CD14-positive monocyte (primary cell): ENCODE measurements at regions of chr6 and their contacts with region 1.

Region 1: GRCh38 chr6:32413427-32414047 is 6.6 kb upstream of the BTNL2 start:
- DNase-seq: peak; percentile 71 to 83 (median 77)
- H3K4me3 ChIP-seq: no peak overlapping the region
- H3K4me3 Mint-ChIP-seq: peak overlapping the region in 1 of 2 donors; percentile 52
- H3K27ac ChIP-seq: no peak overlapping the region
- H3K27ac Mint-ChIP-seq: no peak overlapping the region
- H3K4me1 ChIP-seq: peaks cover 4 to 6% of the 10 kb centered on the region in 2 donors
- H3K4me1 Mint-ChIP-seq: peaks cover 11% of the 10 kb centered on the region
- H3K27me3 ChIP-seq: peaks cover 0 to 10% of the 10 kb centered on the region in 2 donors
- H3K27me3 Mint-ChIP-seq: peaks cover 11 to 23% (median 14%) of the 10 kb centered on the region in 3 donors
- CTCF ChIP-seq: peak; percentile 93

Region 2: GRCh38 chr6:32244946-32245398 is 168.6 kb before region 1 on chr6:
- intact Hi-C with region 1: loop called in 1 of 2 experiments (anchors 10 kb)
- DNase-seq: peak; percentile 55 to 77 (median 61)
- H3K4me3 ChIP-seq: peak overlapping the region in 1 of 3 experiments; percentile 24
- H3K4me3 Mint-ChIP-seq: peak overlapping the region in 1 of 2 donors; percentile 77
- H3K27ac ChIP-seq: no peak overlapping the region
- H3K27ac Mint-ChIP-seq: peak overlapping the region in 1 of 7 donors; percentile 44
- H3K4me1 ChIP-seq: peaks cover 8% of the 10 kb centered on the region in 2 donors
- H3K4me1 Mint-ChIP-seq: peaks cover 9% of the 10 kb centered on the region
- H3K27me3 ChIP-seq: no peaks in the 10 kb centered on the region
- H3K27me3 Mint-ChIP-seq: peaks cover 2 to 7% (median 4%) of the 10 kb centered on the region in 3 donors
- CTCF ChIP-seq: peak; percentile 92

Region 3: GRCh38 chr6:32382757-32383156 is 30.8 kb before region 1 on chr6:
- intact Hi-C with region 1: no loop called
- DNase-seq: no peak
- H3K4me3 ChIP-seq: no peak overlapping the region
- H3K4me3 Mint-ChIP-seq: no peak overlapping the region
- H3K27ac ChIP-seq: no peak overlapping the region
- H3K27ac Mint-ChIP-seq: peak overlapping the region in 1 of 7 donors; percentile 8
- H3K4me1 ChIP-seq: no peaks in the 10 kb centered on the region
- H3K4me1 Mint-ChIP-seq: peaks cover 18% of the 10 kb centered on the region
- H3K27me3 ChIP-seq: no peaks in the 10 kb centered on the region
- H3K27me3 Mint-ChIP-seq: peaks cover 1 to 4% (median 2%) of the 10 kb centered on the region in 3 donors
- CTCF ChIP-seq: no peak

Region 4: GRCh38 chr6:32462609-32463008 is 49.1 kb after region 1 on chr6:
- intact Hi-C with region 1: no loop called
- DNase-seq: peak in 1 of 3 donors; percentile 59
- H3K4me3 ChIP-seq: no peak overlapping the region
- H3K4me3 Mint-ChIP-seq: no peak overlapping the region
- H3K27ac ChIP-seq: no peak overlapping the region
- H3K27ac Mint-ChIP-seq: no peak overlapping the region
- H3K4me1 ChIP-seq: peaks cover 0 to 4% of the 10 kb centered on the region in 2 donors
- H3K4me1 Mint-ChIP-seq: peaks cover 16% of the 10 kb centered on the region
- H3K27me3 ChIP-seq: peaks cover 9 to 10% of the 10 kb centered on the region in 2 donors
- H3K27me3 Mint-ChIP-seq: peaks cover 17 to 34% (median 19%) of the 10 kb centered on the region in 3 donors
- CTCF ChIP-seq: no peak

Region 5: DNA sequence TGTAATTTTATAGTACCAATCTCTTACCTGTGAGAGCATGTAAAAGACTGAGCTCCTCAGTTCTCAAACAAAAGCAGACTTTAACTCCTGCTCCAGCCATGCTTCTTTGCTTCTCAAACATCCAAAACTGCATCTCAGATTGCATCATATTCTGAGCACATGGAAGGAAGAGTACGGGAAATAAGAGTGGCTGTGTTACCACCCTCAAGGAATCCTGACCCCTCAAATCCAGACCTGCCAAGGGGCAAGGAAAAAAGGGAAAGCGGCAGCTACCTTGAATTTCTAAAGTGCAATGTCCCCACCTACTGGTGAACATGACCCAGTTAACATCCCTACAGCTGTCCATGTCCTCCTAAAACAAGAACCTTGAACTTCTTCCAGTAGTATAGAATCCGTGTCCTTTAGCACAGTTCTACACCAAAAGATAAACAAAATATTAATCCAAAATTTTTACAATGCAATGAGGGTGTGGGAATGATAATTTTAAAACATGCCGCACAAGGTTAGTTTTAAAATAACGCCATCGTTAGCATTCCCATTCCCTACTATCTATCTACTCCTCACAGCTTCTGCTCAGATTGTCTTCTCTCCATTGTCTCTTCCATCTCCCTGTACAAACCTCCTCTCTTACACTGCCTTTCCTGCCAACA is 287.0 kb after region 1 on chr6:
- intact Hi-C with region 1: loop called in 1 of 2 experiments (anchors 5 kb)
- DNase-seq: peak; percentile 29 to 67 (median 50)
- H3K4me3 ChIP-seq: no peak overlapping the region
- H3K4me3 Mint-ChIP-seq: peak overlapping the region in 1 of 2 donors; percentile 63
- H3K27ac ChIP-seq: no peak overlapping the region
- H3K27ac Mint-ChIP-seq: peak overlapping the region in 2 of 7 donors; percentile 47 to 54
- H3K4me1 ChIP-seq: peaks cover 7 to 8% of the 10 kb centered on the region in 2 donors
- H3K4me1 Mint-ChIP-seq: peaks cover 12% of the 10 kb centered on the region
- H3K27me3 ChIP-seq: peaks cover 8 to 20% of the 10 kb centered on the region in 2 donors
- H3K27me3 Mint-ChIP-seq: peaks cover 13 to 32% (median 26%) of the 10 kb centered on the region in 3 donors
- CTCF ChIP-seq: peak; percentile 80

Region 6: GRCh38 chr6:32785781-32786533 is 372.4 kb after region 1 on chr6:
- intact Hi-C with region 1: loop called in 1 of 2 experiments (anchors 2 kb)
- DNase-seq: peak; percentile 61 to 69 (median 62)
- H3K4me3 ChIP-seq: no peak overlapping the region
- H3K4me3 Mint-ChIP-seq: peak overlapping the region in 1 of 2 donors; percentile 52
- H3K27ac ChIP-seq: no peak overlapping the region
- H3K27ac Mint-ChIP-seq: peak overlapping the region in 2 of 7 donors; percentile 21 to 82
- H3K4me1 ChIP-seq: peaks cover 8 to 12% of the 10 kb centered on the region in 2 donors
- H3K4me1 Mint-ChIP-seq: peaks cover 8% of the 10 kb centered on the region
- H3K27me3 ChIP-seq: no peaks in the 10 kb centered on the region
- H3K27me3 Mint-ChIP-seq: peaks cover 6 to 12% (median 9%) of the 10 kb centered on the region in 3 donors
- CTCF ChIP-seq: peak; percentile 85

Region 7: GRCh38 chr6:32796848-32797776 is 383.6 kb after region 1 on chr6:
- intact Hi-C with region 1: loop called (anchors 2 to 5 kb)
- DNase-seq: peak; percentile 65 to 88 (median 76)
- H3K4me3 ChIP-seq: peak overlapping the region; percentile 0 to 69 (median 31)
- H3K4me3 Mint-ChIP-seq: peak overlapping the region; percentile 72 to 93
- H3K27ac ChIP-seq: peak overlapping the region; percentile 8 to 42
- H3K27ac Mint-ChIP-seq: peak overlapping the region; percentile 62 to 90 (median 87)
- H3K4me1 ChIP-seq: peaks cover 43 to 46% of the 10 kb centered on the region in 2 donors
- H3K4me1 Mint-ChIP-seq: peaks cover 43% of the 10 kb centered on the region
- H3K27me3 ChIP-seq: peaks cover 0 to 5% of the 10 kb centered on the region in 2 donors
- H3K27me3 Mint-ChIP-seq: peaks cover 0 to 4% (median 3%) of the 10 kb centered on the region in 3 donors
- CTCF ChIP-seq: peak; percentile 92

Region 8: GRCh38 chr6:32868257-32868788 is 454.8 kb after region 1 on chr6:
- intact Hi-C with region 1: loop called (anchors 5 to 10 kb)
- DNase-seq: peak; percentile 76 to 78 (median 77)
- H3K4me3 ChIP-seq: no peak overlapping the region
- H3K4me3 Mint-ChIP-seq: no peak overlapping the region
- H3K27ac ChIP-seq: no peak overlapping the region
- H3K27ac Mint-ChIP-seq: no peak overlapping the region
- H3K4me1 ChIP-seq: peaks cover 14 to 16% of the 10 kb centered on the region in 2 donors
- H3K4me1 Mint-ChIP-seq: peaks cover 13% of the 10 kb centered on the region
- H3K27me3 ChIP-seq: peaks cover 2 to 4% of the 10 kb centered on the region in 2 donors
- H3K27me3 Mint-ChIP-seq: peaks cover 10 to 16% (median 10%) of the 10 kb centered on the region in 3 donors
- CTCF ChIP-seq: peak; percentile 87